Caco-2 (cell line): ENCODE measurements at regions of chr2 and their contacts with region 1.

Region 1: GRCh38 chr2:169715379-169716237 is 18.0 kb upstream of the KLHL23 start:
- DNase-seq: peak; percentile 61 to 62
- H3K4me3 ChIP-seq: peak overlapping the region; percentile 33
- H3K4me3 Mint-ChIP-seq: peak overlapping the region; percentile 72
- H3K27ac Mint-ChIP-seq: peak overlapping the region; percentile 37
- H3K4me1 ChIP-seq: peaks cover 19% of the 10 kb centered on the region
- H3K4me1 Mint-ChIP-seq: peaks cover 15% of the 10 kb centered on the region
- H3K27me3 ChIP-seq: no peaks in the 10 kb centered on the region
- H3K27me3 Mint-ChIP-seq: no peaks in the 10 kb centered on the region
- CTCF ChIP-seq: no peak

Region 2: GRCh38 chr2:169694113-169694903 is 21.3 kb before region 1 on chr2 and contains the starts of genes CFAP210 and PHOSPHO2:
- CTCF ChIA-PET with region 1: no interaction called
- POLR2A ChIA-PET with region 1: interaction called, 3 read pairs
- intact Hi-C with region 1: loop called (anchors 1 kb)
- DNase-seq: peak; percentile 98
- H3K4me3 ChIP-seq: peak within 1 kb of the TSS; percentile 79
- H3K4me3 Mint-ChIP-seq: peak within 1 kb of the TSS; percentile 87
- H3K27ac Mint-ChIP-seq: peak within 1 kb of the TSS; percentile 98
- H3K4me1 ChIP-seq: peaks cover 9% of the 10 kb centered on the region; the same call in 1 of the 2 replicates
- H3K4me1 Mint-ChIP-seq: peaks cover 9% of the 10 kb centered on the region
- H3K27me3 ChIP-seq: no peaks in the 10 kb centered on the region
- H3K27me3 Mint-ChIP-seq: no peaks in the 10 kb centered on the region
- CTCF ChIP-seq: no peak
- total RNA-seq, gene CFAP210: not detected in 2 replicates
- total RNA-seq, gene PHOSPHO2: 5.0 and 5.5 TPM in 2 replicates

Region 3: GRCh38 chr2:169732583-169733358 is 17.2 kb after region 1 on chr2:
- CTCF ChIA-PET with region 1: no interaction called
- POLR2A ChIA-PET with region 1: interaction called, 3 read pairs
- intact Hi-C with region 1: loop called (anchors 2 kb)
- DNase-seq: no peak
- H3K4me3 ChIP-seq: peak overlapping the region; percentile 78
- H3K4me3 Mint-ChIP-seq: peak overlapping the region; percentile 95
- H3K27ac Mint-ChIP-seq: peak overlapping the region; percentile 88
- H3K4me1 ChIP-seq: peaks cover 14% of the 10 kb centered on the region
- H3K4me1 Mint-ChIP-seq: peaks cover 5% of the 10 kb centered on the region
- H3K27me3 ChIP-seq: no peaks in the 10 kb centered on the region
- H3K27me3 Mint-ChIP-seq: no peaks in the 10 kb centered on the region
- CTCF ChIP-seq: no peak